ENCODE measurements at regions of chr10 and their contacts with region 1.

Region 1: GRCh38 chr10:68074775-68075549 is at the start of gene HERC4:
- DNase-seq: peak; percentile 94
- H3K4me3 Mint-ChIP-seq: peak within 1 kb of the TSS; percentile 89
- H3K27ac Mint-ChIP-seq: peak within 1 kb of the TSS; percentile 89
- H3K4me1 Mint-ChIP-seq: peaks cover 35% of the 10 kb centered on the region
- H3K27me3 Mint-ChIP-seq: no peaks in the 10 kb centered on the region
- total RNA-seq, gene HERC4: 55.7 to 59.0 TPM

Region 2: DNA sequence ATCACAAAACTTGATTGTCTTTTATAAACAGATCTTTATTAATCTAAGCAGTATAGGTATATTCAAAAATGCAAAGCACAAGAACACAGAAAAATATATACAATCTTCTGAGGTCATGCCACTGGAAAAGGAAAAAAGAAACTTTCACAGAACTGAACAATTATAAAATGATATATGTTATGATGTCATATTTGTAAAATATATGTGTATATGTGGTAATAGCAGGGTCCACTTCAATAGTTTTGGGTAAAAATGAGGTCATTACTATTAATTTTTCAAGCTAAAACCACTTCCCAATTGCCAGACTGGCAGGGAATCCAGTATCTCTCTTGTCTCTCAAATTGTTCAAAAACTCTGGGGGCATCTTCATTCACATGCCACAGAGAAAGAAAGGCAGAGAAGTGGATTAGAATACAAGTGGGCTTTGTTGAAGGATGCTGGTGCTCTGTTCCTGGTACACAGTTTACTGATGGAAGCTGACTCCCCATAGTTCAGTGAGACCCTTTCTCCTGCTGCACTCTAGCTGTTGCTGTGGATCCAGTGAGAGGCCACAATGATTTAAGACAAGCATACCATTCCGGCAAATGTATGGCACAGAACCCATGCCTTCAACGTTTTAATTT is 398.6 kb before region 1 on chr10:
- CTCF ChIA-PET with region 1: no interaction called
- POLR2A ChIA-PET with region 1: no interaction called
- intact Hi-C with region 1: no loop called
- DNase-seq: no peak
- H3K4me3 Mint-ChIP-seq: no peak overlapping the region
- H3K27ac Mint-ChIP-seq: no peak overlapping the region
- H3K4me1 Mint-ChIP-seq: no peaks in the 10 kb centered on the region
- H3K27me3 Mint-ChIP-seq: peaks cover 23% of the 10 kb centered on the region

Region 3: DNA sequence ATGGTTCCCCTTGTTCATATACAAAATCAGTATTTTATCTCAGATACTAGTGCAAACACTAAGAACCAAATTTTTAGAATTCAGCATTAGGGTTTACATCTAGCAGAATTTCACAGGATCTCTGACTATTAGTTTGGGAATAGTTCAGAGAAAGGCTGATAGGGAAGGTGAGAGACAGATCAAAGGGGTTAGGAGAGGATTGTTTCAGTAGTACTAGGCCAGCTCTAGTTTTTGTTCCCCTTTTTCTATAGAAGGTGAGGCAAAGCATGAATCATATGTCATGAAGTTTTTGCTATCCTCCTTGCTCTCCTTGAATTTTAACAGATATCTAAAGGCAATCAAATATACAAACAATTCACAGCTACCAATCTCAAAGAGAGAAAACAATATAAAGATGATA is 352.8 kb before region 1 on chr10:
- CTCF ChIA-PET with region 1: no interaction called
- POLR2A ChIA-PET with region 1: no interaction called
- intact Hi-C with region 1: no loop called
- DNase-seq: no peak
- H3K4me3 Mint-ChIP-seq: no peak overlapping the region
- H3K27ac Mint-ChIP-seq: no peak overlapping the region
- H3K4me1 Mint-ChIP-seq: no peaks in the 10 kb centered on the region
- H3K27me3 Mint-ChIP-seq: no peaks in the 10 kb centered on the region

Region 4: GRCh38 chr10:68043030-68043429 is 31.9 kb before region 1 on chr10:
- CTCF ChIA-PET with region 1: no interaction called
- POLR2A ChIA-PET with region 1: no interaction called
- intact Hi-C with region 1: loop called (anchors 2 kb)
- DNase-seq: no peak
- H3K4me3 Mint-ChIP-seq: no peak overlapping the region
- H3K27ac Mint-ChIP-seq: peak overlapping the region; percentile 66
- H3K4me1 Mint-ChIP-seq: peaks cover 31% of the 10 kb centered on the region
- H3K27me3 Mint-ChIP-seq: no peaks in the 10 kb centered on the region

Region 5: GRCh38 chr10:68053553-68053952 is 21.4 kb before region 1 on chr10:
- CTCF ChIA-PET with region 1: no interaction called
- POLR2A ChIA-PET with region 1: no interaction called
- intact Hi-C with region 1: no loop called
- DNase-seq: no peak
- H3K4me3 Mint-ChIP-seq: no peak overlapping the region
- H3K27ac Mint-ChIP-seq: no peak overlapping the region
- H3K4me1 Mint-ChIP-seq: peaks cover 30% of the 10 kb centered on the region
- H3K27me3 Mint-ChIP-seq: no peaks in the 10 kb centered on the region

Region 6: GRCh38 chr10:68163735-68164134 is 88.8 kb after region 1 on chr10:
- CTCF ChIA-PET with region 1: no interaction called
- POLR2A ChIA-PET with region 1: no interaction called
- intact Hi-C with region 1: no loop called
- DNase-seq: no peak
- H3K4me3 Mint-ChIP-seq: no peak overlapping the region
- H3K27ac Mint-ChIP-seq: peak overlapping the region; percentile 25
- H3K4me1 Mint-ChIP-seq: peaks cover 9% of the 10 kb centered on the region
- H3K27me3 Mint-ChIP-seq: peaks cover 2% of the 10 kb centered on the region

Measured in activated CD4-positive, alpha-beta memory T cell treated with anti-CD3 and anti-CD28 coated beads for 36 hours (primary cell).